ENCODE measurements at regions of chr7 and their contacts with region 1.

Region 1: DNA sequence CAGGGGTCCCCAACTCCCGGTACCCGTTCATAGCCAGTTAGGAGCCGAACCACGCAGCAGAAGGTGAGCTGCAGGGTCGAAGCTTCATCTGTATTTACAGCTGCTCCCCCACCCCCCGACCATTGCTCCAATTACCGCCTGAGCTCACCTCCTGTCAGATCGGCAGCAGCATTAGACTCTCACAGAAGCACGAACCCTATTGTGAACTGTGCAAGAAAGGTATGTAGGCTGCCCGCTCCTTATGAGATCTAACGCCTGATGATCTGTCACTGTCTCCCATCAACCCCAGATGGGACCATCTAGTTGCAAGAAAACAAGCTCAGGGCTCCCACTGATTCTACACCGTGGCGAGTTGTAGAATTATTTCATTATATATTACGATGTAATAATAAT is 14.6 kb upstream of the AZGP1 start:
- DNase-seq: no peak
- ATAC-seq: no peak
- H3K4me3 ChIP-seq: no peak overlapping the region
- H3K27ac ChIP-seq: no peak overlapping the region
- H3K4me1 ChIP-seq: peaks cover 7 to 16% of the 10 kb centered on the region in 2 experiments; a peak in 3 of 5 replicates
- H3K27me3 ChIP-seq: peaks cover 24 to 45% of the 10 kb centered on the region in 2 experiments
- CTCF ChIP-seq: no peak
- EP300 ChIP-seq: no peak
- POLR2A ChIP-seq: no peak
- RAD21 ChIP-seq: no peak

Region 2: DNA sequence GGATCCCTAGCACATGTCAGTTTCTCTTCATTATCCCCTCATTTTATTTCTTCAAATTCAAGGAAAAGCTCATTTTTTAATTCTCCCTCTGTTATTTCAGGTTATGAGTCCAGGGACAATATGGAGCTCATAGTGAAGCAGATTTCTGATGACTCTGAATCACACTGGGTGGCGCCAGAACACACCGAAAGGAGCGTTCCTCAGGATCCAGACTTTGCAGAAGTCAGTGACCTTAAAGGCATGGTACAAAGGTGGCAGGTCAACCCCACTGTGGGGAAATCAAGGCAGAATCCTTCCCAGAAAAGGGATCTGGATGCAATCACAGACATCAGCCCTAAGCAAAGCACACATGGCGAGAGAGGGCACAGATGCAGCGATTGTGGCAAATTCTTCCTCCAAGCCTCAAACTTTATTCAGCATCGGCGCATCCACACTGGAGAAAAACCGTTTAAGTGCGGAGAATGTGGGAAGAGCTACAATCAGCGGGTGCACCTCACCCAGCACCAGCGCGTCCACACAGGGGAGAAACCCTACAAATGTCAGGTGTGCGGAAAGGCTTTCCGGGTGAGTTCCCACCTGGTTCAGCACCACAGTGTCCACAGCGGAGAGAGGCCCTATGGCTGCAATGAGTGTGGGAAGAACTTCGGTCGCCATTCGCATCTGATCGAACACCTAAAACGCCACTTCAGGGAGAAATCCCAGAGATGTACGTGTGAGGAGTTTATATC is 464.6 kb before region 1 on chr7:
- CTCF ChIA-PET with region 1: no interaction called
- POLR2A ChIA-PET with region 1: no interaction called
- in situ Hi-C with region 1: no loop called
- intact Hi-C with region 1: loop called (anchors 5 kb)
- DNase-seq: peak in 1 of 4 experiments; percentile 45
- ATAC-seq: peak; percentile 90
- H3K4me3 ChIP-seq: no peak overlapping the region
- H3K27ac ChIP-seq: no peak overlapping the region
- H3K4me1 ChIP-seq: no peaks in the 10 kb centered on the region
- H3K27me3 ChIP-seq: no peaks in the 10 kb centered on the region; a peak in 1 of 5 replicates
- CTCF ChIP-seq: peak; percentile 48 to 64 (median 53)
- EP300 ChIP-seq: no peak
- POLR2A ChIP-seq: no peak
- RAD21 ChIP-seq: peak in 1 of 2 experiments; percentile 50; a peak in 2 of 4 replicates

Region 3: GRCh38 chr7:99631295-99632109 is 359.0 kb before region 1 on chr7:
- CTCF ChIA-PET with region 1: interaction called, 8 read pairs
- POLR2A ChIA-PET with region 1: no interaction called
- in situ Hi-C with region 1: no loop called
- intact Hi-C with region 1: loop called (anchors 1 kb)
- DNase-seq: peak; percentile 39 to 76 (median 58)
- ATAC-seq: peak; percentile 94
- H3K4me3 ChIP-seq: no peak overlapping the region
- H3K27ac ChIP-seq: no peak overlapping the region; the same call in 2 of the 3 replicates
- H3K4me1 ChIP-seq: peaks cover 0 to 4% of the 10 kb centered on the region in 2 experiments; a peak in 4 of 5 replicates
- H3K27me3 ChIP-seq: no peaks in the 10 kb centered on the region
- CTCF ChIP-seq: peak; percentile 70 to 90 (median 80)
- EP300 ChIP-seq: no peak
- POLR2A ChIP-seq: no peak
- RAD21 ChIP-seq: peak; percentile 84 to 88

Region 4: DNA sequence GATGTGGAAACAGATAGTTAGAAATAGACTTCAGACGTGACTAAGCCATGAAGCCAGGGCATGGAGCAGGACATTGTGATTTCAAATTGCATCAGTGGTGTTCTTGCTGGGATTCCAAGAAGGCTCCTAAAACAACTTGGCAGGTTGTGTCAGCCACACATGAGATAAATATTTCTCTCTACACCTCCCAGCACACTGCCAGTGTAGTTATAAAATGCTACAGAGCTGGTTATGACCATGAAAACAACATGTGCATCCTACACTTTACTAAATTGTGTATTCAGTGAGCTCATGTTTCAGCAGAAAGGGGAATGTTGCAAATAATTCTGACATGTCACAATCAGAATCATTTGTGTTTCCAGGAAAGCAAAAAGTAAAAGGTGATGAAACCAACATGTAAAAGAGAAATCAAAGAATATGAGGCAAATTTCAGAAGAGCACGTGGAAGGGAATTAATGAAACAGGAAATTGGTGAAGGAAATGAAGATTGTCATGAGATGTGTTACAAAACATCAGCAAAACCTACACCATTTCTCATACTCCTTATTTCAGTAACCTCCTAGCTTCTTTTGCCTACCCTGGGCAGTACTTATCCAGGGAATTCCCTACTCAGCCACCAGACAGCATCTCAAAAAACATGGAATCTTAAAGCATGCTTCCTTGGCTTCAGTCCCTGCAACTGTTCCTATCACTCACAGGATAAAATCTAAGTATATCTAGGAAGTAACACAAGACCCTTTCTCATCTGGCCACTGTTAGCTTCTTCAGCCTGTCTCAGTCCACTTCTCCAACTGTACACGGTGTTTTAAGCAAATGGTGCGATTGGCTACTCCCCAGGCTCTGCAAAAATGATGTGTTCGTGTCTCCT is 249.6 kb before region 1 on chr7:
- CTCF ChIA-PET with region 1: no interaction called
- POLR2A ChIA-PET with region 1: no interaction called
- in situ Hi-C with region 1: no loop called
- intact Hi-C with region 1: no loop called
- DNase-seq: no peak
- ATAC-seq: peak; percentile 52
- H3K4me3 ChIP-seq: no peak overlapping the region
- H3K27ac ChIP-seq: no peak overlapping the region
- H3K4me1 ChIP-seq: no peaks in the 10 kb centered on the region
- H3K27me3 ChIP-seq: no peaks in the 10 kb centered on the region
- CTCF ChIP-seq: no peak
- EP300 ChIP-seq: no peak
- POLR2A ChIP-seq: no peak
- RAD21 ChIP-seq: no peak

Region 5: DNA sequence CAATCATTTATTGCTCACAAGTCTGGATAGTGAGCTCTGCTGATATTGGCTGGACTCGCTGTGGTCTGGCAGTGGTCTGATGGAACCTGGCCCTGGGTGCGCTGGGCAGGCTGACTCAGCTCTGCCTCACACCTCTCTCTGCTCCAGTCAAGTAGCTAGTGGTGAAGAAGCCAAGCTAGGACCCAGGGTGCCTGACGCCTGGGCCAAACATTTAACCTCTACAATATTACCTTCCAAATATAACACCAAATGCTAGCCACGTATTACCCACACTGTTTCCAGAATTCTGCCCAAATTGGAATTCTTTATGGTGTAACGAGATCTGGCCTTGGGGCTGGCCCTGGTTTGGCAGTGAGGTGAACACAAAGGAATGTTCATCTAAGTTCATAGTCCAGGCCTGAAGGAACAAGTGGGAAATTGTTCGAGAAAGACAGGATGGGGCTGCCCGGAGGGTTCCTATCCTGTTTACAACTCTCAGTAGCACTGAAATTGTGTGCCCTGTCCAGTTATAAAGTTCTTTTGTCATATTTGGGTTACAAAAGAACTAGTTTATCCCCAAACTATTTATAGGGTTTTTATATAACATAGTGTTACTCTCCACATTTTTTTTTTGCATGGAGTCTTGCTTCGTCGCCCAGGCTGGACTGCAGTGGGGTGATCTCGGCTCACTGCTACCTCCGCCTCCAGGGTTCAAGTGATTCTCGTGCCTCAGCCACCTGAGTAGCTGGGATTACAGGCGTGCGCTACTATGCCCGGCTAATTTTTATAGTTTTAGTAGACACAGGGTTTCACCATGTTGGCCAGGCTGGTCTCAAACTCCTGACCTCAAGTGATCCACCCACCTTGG is 130.0 kb before region 1 on chr7:
- CTCF ChIA-PET with region 1: no interaction called
- POLR2A ChIA-PET with region 1: no interaction called
- in situ Hi-C with region 1: no loop called
- intact Hi-C with region 1: no loop called
- DNase-seq: no peak
- ATAC-seq: peak; percentile 61
- H3K4me3 ChIP-seq: no peak overlapping the region
- H3K27ac ChIP-seq: no peak overlapping the region
- H3K4me1 ChIP-seq: no peaks in the 10 kb centered on the region
- H3K27me3 ChIP-seq: no peaks in the 10 kb centered on the region; a peak in 1 of 5 replicates
- CTCF ChIP-seq: no peak
- EP300 ChIP-seq: no peak
- POLR2A ChIP-seq: no peak
- RAD21 ChIP-seq: no peak

Region 6: DNA sequence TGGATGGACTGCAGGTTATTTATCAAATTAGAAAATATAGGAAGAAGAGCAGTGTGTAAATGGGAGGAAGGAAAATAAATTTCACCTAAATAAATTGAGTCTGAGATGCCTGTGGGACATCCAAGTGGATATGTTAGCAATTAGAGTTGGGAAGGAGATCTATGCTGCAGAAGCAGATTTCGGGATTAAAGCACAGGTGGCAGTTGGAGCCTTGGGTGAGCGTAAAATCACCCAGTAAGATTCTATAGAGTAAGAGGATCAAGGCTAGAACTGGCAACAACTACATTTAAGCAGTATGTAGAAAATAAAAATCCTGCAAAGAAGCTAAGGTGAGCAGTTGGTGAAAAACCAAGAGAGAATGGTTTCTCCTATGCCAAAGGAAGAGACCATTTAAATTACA is 79.5 kb before region 1 on chr7:
- CTCF ChIA-PET with region 1: interaction called, 24 read pairs
- POLR2A ChIA-PET with region 1: no interaction called
- in situ Hi-C with region 1: loop called (anchors 5 kb)
- intact Hi-C with region 1: loop called (anchors 1 kb)
- DNase-seq: no peak
- ATAC-seq: no peak
- H3K4me3 ChIP-seq: no peak overlapping the region
- H3K27ac ChIP-seq: no peak overlapping the region
- H3K4me1 ChIP-seq: no peaks in the 10 kb centered on the region
- H3K27me3 ChIP-seq: no peaks in the 10 kb centered on the region
- CTCF ChIP-seq: no peak
- EP300 ChIP-seq: no peak
- POLR2A ChIP-seq: no peak
- RAD21 ChIP-seq: no peak

Region 7: DNA sequence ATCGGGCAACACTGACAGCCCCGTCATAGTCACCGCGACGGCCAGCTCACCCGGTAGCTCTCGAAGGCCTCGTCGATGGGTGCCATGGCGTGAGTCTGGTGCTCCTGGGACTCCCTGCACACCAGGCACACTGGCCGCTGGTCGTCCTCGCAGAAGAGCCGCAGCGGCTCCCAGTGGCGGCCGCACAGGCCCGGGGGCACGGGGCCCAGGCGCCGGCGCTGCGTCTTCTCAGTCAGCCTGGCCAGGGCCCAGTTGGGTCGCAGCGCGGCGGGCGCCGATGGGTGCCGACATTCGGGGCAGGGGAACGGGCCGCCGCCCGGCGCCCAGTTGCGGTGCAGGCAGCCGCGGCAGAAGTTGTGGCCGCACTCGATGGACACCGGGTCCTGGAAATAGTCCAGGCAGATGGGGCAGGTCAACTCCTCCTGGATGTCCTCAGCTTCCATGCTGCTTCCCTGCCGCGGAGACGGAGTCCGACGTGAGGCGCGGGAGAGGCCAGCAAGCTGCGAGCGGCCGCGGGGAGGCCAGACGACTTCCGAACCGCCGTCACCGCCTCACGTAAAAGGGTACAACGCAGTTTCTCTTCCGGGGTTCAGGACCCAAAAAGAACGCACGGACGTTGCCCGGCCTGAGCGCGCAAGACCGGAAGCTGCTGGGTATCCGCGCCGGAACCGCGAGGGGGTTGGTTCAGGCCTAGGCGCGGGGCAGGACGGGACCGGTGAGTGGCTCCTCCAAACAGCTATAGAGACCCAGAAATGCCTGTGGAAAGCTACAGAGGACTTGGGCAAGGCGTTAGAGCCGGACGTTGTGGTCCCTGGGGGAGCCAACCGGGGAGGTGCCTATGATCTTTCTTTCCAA is 71.3 kb before region 1 on chr7 and contains the start of gene TRIM4:
- CTCF ChIA-PET with region 1: interaction called, 24 read pairs
- POLR2A ChIA-PET with region 1: interaction called, 3 read pairs
- in situ Hi-C with region 1: loop called (anchors 5 kb)
- intact Hi-C with region 1: no loop called
- DNase-seq: peak; percentile 96 to 97 (median 96)
- ATAC-seq: peak; percentile 99
- H3K4me3 ChIP-seq: peak within 1 kb of the TSS; percentile 86
- H3K27ac ChIP-seq: peak within 1 kb of the TSS; percentile 81
- H3K4me1 ChIP-seq: peaks cover 13 to 18% of the 10 kb centered on the region in 2 experiments; a peak in 4 of 5 replicates
- H3K27me3 ChIP-seq: no peaks in the 10 kb centered on the region
- CTCF ChIP-seq: peak; percentile 50 to 70 (median 53)
- EP300 ChIP-seq: no peak; the same call in none of the 2 replicates
- POLR2A ChIP-seq: peak; percentile 93
- RAD21 ChIP-seq: peak in 1 of 2 experiments; percentile 36; a peak in 3 of 4 replicates
- polyA plus RNA-seq, gene TRIM4: 6.2 to 6.5 TPM

Region 8: GRCh38 chr7:99928994-99929729 is 61.3 kb before region 1 on chr7 and contains the start of gene GJC3:
- CTCF ChIA-PET with region 1: interaction called, 5 read pairs
- POLR2A ChIA-PET with region 1: interaction called, 3 read pairs
- in situ Hi-C with region 1: no loop called
- intact Hi-C with region 1: loop called (anchors 1 kb)
- DNase-seq: peak; percentile 65 to 79 (median 72)
- ATAC-seq: peak; percentile 98
- H3K4me3 ChIP-seq: peak within 1 kb of the TSS; percentile 35
- H3K27ac ChIP-seq: no peak within 1 kb of the TSS
- H3K4me1 ChIP-seq: peaks cover 3 to 10% of the 10 kb centered on the region in 2 experiments; a peak in 3 of 5 replicates
- H3K27me3 ChIP-seq: peaks cover 6 to 22% of the 10 kb centered on the region in 2 experiments; a peak in 3 of 5 replicates
- CTCF ChIP-seq: peak; percentile 67 to 82 (median 71)
- EP300 ChIP-seq: peak; percentile 24; the same call in 1 of the 2 replicates
- POLR2A ChIP-seq: no peak
- RAD21 ChIP-seq: peak; percentile 60 to 69
- polyA plus RNA-seq, gene GJC3: 0.10 TPM in 1 of 2 experiments, not detected in the other

Region 9: DNA sequence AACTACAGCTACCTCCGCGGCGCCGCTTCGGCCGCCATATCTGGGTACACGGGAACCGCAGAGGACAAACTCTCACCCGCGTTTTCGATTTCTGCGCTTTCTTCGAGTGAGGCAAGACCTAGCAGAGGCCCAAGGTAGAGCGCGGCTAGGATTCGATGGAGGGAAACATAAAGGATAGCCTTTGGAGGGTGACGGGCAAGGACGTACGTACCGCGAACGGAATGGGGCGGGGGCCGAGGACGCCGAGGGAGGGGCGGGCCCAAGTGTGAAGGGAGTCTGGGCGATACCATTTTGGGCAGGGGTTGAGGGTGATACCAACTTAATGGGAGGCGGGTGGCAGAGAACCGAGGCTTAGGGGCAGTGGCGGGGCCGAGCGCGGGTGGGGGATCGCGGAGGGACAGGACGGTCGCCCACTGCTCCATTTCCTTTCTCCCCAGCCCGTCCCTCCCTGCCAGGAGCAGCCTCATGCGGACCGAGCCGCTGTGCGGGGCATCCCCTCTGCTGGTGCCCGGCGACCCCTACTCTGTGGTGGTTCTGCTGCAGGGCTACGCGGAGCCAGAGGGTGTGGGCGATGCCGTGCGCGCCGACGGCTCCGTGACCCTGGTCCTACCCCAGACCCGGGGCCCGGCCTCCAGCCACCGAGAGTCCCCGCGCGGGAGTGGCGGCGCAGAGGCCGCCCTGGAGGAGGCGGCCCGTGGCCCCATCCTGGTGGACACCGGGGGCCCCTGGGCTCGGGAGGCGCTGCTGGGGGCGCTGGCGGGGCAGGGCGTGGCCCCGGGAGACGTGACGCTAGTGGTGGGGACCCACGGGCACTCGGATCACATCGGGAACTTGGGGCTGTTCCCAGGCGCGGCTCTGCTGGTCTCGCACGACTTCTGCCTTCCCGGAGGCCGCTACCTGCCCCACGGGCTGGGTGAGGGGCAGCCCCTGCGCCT is 136.7 kb after region 1 on chr7 and contains the start of gene MBLAC1:
- CTCF ChIA-PET with region 1: interaction called, 12 read pairs
- POLR2A ChIA-PET with region 1: interaction called, 4 read pairs
- in situ Hi-C with region 1: loop called (anchors 5 kb)
- intact Hi-C with region 1: loop called (anchors 1 kb)
- DNase-seq: peak; percentile 90 to 96 (median 94)
- ATAC-seq: peak; percentile 70
- H3K4me3 ChIP-seq: peak within 1 kb of the TSS; percentile 74
- H3K27ac ChIP-seq: peak within 1 kb of the TSS; percentile 97
- H3K4me1 ChIP-seq: peaks cover 35 to 60% of the 10 kb centered on the region in 2 experiments
- H3K27me3 ChIP-seq: no peaks in the 10 kb centered on the region
- CTCF ChIP-seq: peak in 1 of 3 experiments; percentile 25; a peak in 1 of 6 replicates
- EP300 ChIP-seq: 0 out of 2 replicates have a peak, but pooled peaks have one; percentile 7
- POLR2A ChIP-seq: peak; percentile 92
- RAD21 ChIP-seq: no peak
- polyA plus RNA-seq, gene MBLAC1: 0.03 TPM

Region 10: DNA sequence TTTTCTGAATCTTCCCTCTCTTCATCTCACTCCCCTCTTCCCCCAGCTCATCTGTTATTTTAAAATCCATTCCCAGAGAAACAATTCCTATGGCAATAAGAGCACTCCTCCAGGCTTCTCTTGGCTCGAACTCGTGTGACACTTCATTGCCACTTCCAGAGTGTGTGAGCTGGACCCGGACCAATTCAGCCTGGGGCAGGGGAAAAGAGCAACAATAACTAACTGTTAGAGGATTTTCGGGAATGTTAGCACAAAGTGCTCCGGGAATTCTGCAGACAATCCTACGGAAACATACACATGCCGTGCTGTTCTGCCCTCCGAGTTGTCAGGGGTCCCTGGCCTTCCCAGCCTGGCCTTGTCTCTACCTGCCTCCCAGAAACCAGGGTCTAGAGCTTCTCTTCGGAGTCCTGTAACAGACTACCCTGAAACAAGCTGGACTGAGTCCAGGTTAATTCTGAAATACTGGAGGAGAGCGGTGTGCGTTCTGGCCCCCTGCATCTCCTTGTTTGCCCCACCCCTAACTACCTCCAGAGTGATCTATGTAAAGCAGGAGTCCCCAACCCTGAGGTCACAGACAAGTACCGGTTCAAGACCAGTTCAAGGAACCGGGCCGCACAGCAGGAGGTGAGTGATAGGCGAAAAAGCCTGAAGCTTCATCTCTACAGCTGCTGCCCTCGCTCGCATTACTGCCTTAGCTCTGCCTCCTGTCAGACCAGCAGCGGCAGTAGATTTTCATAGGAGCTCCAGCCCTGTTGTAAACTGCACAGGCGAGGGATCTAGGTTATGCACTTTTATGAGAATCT is 1383.6 kb after region 1 on chr7:
- CTCF ChIA-PET with region 1: no interaction called
- POLR2A ChIA-PET with region 1: no interaction called
- in situ Hi-C with region 1: no loop called
- intact Hi-C with region 1: no loop called
- DNase-seq: peak in 1 of 4 experiments; percentile 35
- ATAC-seq: peak; percentile 65; the same call in 2 of the 3 replicates
- H3K4me3 ChIP-seq: no peak overlapping the region
- H3K27ac ChIP-seq: no peak overlapping the region
- H3K4me1 ChIP-seq: no peaks in the 10 kb centered on the region
- H3K27me3 ChIP-seq: peaks cover 41 to 72% of the 10 kb centered on the region in 2 experiments
- CTCF ChIP-seq: no peak
- EP300 ChIP-seq: no peak
- POLR2A ChIP-seq: no peak
- RAD21 ChIP-seq: no peak

Measured in K562 (cell line).